ENCODE measurements at regions of chr3 and their contacts with region 1.

Region 1: DNA sequence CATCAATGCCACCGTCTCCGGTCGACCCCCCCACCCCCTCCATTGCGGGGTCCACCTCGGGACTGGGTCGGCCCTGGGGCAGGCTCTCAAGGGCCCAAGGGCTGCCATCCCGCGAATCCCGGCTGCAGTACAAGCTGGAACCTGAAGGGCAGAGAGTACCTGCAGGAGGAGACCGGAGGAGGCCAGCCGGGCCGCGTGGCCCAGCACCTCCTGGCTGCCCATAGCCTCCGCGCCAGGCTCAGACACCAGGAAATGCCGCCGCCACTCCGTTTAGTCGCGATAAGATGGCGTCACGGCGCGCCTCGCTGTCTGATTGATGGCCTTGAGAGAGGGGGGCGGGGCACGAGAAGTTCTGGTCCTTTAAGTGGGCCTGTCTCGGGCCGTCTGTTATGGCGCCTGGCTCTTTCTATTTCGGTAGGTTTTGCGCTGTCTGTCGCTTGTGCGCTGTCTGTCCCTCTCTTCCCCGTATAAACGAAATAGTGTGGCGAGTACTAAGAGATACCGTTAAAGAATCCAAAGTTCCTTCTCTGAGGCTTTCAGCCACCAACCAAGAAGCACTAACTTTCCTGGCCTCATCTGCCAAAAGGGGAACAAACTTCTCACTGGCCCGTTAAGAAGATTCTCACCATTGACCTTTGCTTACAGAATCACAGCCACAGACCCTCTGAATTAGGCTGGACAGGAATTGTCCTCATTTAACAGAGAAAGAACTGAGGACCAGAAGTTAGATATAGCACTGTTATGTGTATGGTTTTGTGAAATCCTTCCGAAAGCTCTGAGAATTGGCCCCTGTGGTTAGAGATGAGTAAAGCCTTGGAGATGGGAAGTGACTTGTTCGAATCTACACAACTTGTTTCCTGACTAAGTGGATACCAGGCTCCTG is at the start of gene RFT1:
- DNase-seq: peak; percentile 73
- ATAC-seq: peak; percentile 89
- H3K4me3 ChIP-seq: peak within 1 kb of the TSS; percentile 92
- H3K27ac ChIP-seq: peak within 1 kb of the TSS; percentile 87
- H3K4me1 ChIP-seq: peaks cover 7% of the 10 kb centered on the region; the same call in 1 of the 2 replicates
- H3K27me3 ChIP-seq: no peaks in the 10 kb centered on the region
- CTCF ChIP-seq: no peak
- EP300 ChIP-seq: no peak
- POLR2A ChIP-seq: peak; percentile 98
- RAD21 ChIP-seq: no peak
- polyA plus RNA-seq, gene RFT1: 24.7 to 29.0 TPM

Region 2: GRCh38 chr3:52552089-52552488 is 578.3 kb before region 1 on chr3:
- CTCF ChIA-PET with region 1: no interaction called
- POLR2A ChIA-PET with region 1: no interaction called
- RAD21 ChIA-PET with region 1: no interaction called
- SMC1A ChIA-PET with region 1: no interaction called
- in situ Hi-C with region 1: no loop called
- intact Hi-C with region 1: no loop called
- DNase-seq: no peak
- ATAC-seq: no peak
- H3K4me3 ChIP-seq: no peak overlapping the region
- H3K27ac ChIP-seq: no peak overlapping the region
- H3K4me1 ChIP-seq: no peaks in the 10 kb centered on the region
- H3K27me3 ChIP-seq: no peaks in the 10 kb centered on the region
- CTCF ChIP-seq: no peak
- EP300 ChIP-seq: no peak
- POLR2A ChIP-seq: no peak
- RAD21 ChIP-seq: no peak

Region 3: DNA sequence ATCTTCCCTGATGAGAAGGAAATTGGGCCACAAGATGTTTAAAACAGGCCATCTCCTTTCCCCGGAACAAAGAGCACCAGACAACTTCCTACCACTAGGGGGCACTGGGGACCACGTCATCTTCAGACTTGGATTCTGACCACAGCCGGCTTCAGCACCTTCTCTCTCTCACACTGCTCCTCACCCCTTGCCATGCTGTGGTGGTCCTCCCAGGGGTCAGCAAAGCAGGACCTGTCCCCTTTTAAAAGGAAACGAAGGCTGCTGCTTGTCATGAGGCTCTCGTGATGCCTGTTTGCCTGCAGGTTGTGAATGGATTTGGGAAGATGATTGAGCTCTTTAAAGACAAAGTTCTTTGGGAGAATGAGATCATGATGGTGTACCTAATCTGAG is 16.4 kb before region 1 on chr3:
- CTCF ChIA-PET with region 1: interaction called, 236 read pairs
- POLR2A ChIA-PET with region 1: interaction called, 7 read pairs
- RAD21 ChIA-PET with region 1: interaction called, 8 read pairs
- SMC1A ChIA-PET with region 1: interaction called, 67 read pairs
- in situ Hi-C with region 1: no loop called
- intact Hi-C with region 1: no loop called
- DNase-seq: no peak
- ATAC-seq: peak; percentile 99
- H3K4me3 ChIP-seq: no peak overlapping the region
- H3K27ac ChIP-seq: no peak overlapping the region
- H3K4me1 ChIP-seq: no peaks in the 10 kb centered on the region
- H3K27me3 ChIP-seq: no peaks in the 10 kb centered on the region
- CTCF ChIP-seq: peak; percentile 86 to 97 (median 94)
- EP300 ChIP-seq: no peak
- POLR2A ChIP-seq: no peak
- RAD21 ChIP-seq: peak; percentile 90

Region 4: DNA sequence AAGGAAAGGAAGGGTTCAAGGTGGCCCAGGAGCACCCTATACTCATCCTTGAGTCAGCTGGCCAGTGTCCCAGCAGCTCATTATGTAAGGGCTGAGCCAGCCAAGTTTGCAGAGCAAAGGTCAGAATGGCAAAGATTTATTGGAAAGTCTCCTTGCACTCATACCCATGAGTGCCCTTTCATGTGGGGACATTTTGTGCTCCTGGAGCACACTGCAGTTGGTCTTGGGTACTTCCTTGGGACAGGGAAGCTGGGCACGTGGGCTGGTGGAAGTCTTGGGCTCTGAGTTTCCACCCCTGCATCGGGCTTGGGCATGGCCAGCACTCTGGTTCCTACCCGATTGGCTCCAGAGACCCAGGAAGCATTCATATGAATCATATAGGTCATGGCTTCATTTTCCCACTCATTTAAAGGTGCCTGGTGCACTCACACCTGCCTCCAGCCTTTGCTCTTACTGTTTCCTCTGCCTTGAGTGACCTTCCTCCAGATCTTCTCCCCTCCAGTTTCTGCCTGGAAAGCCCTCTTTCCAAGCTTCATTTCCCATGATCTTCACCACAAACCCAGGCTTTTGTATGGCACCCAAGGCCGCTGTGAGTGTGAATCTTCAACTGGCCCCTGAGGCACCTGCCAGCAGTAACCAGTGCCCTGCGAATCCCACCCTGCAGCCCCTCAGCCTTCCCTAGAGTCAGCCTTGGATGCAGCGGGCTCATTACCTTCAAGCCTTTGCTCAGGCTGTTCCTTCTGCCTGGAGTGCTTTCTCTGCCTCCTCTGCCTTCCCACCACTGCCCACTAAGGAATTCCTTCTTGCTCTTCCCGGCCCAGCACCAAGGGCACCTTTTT is 20.0 kb after region 1 on chr3:
- CTCF ChIA-PET with region 1: interaction called, 27 read pairs
- POLR2A ChIA-PET with region 1: no interaction called
- RAD21 ChIA-PET with region 1: interaction called, 7 read pairs
- SMC1A ChIA-PET with region 1: interaction called, 65 read pairs
- in situ Hi-C with region 1: no loop called
- intact Hi-C with region 1: no loop called
- DNase-seq: no peak
- ATAC-seq: no peak
- H3K4me3 ChIP-seq: no peak overlapping the region
- H3K27ac ChIP-seq: no peak overlapping the region
- H3K4me1 ChIP-seq: no peaks in the 10 kb centered on the region
- H3K27me3 ChIP-seq: no peaks in the 10 kb centered on the region; a peak in 1 of 4 replicates
- CTCF ChIP-seq: no peak
- EP300 ChIP-seq: no peak
- POLR2A ChIP-seq: no peak
- RAD21 ChIP-seq: no peak

Region 5: GRCh38 chr3:53160660-53161449 is 30.4 kb after region 1 on chr3 and contains the start of gene PRKCD:
- CTCF ChIA-PET with region 1: interaction called, 45 read pairs
- POLR2A ChIA-PET with region 1: interaction called, 4 read pairs
- RAD21 ChIA-PET with region 1: interaction called, 10 read pairs
- SMC1A ChIA-PET with region 1: interaction called, 11 read pairs
- in situ Hi-C with region 1: no loop called
- intact Hi-C with region 1: loop called (anchors 2 kb)
- DNase-seq: no peak
- ATAC-seq: peak; percentile 74
- H3K4me3 ChIP-seq: peak within 1 kb of the TSS; percentile 97
- H3K27ac ChIP-seq: peak within 1 kb of the TSS; percentile 92
- H3K4me1 ChIP-seq: peaks cover 45% of the 10 kb centered on the region
- H3K27me3 ChIP-seq: no peaks in the 10 kb centered on the region; a peak in 1 of 4 replicates
- CTCF ChIP-seq: peak; percentile 30 to 65 (median 49)
- EP300 ChIP-seq: no peak
- POLR2A ChIP-seq: peak; percentile 78
- RAD21 ChIP-seq: peak; percentile 13; the same call in 1 of the 2 replicates
- polyA plus RNA-seq, gene PRKCD: 13.2 to 22.1 TPM

Region 6: DNA sequence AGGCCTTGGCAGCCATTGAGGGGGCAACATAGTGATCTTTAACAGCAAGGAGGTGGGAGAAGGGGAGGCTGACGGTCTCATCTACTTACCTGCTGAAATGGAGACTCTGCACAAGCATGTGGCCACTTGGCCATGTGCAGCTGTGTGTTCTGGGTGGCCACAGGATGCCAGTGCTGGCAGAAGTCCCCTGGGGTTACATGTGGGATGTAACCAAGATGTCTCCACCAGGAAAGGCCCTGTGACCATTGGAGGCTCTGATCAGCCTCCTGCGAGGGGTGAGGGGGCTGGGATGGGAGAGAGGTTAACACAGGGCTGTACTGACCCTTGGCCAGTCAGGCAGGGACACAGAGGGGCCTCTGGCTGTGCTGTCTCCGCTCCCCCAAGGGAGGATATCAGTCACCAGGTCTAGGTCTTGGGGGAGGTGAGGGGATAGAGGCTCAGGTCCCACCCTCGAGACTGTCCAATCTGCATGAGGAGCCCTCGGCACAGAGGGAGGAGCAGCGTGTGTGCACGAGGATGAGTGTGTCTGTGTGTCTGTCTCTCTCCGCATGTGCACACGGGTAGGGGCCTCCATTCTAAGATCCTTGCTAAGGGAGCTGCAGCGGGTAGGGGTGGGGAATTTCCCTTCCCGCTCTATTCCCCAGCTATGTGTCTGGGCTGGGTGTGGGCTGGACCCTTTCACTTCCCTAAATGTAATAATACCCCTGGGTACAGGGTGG is 50.0 kb after region 1 on chr3:
- CTCF ChIA-PET with region 1: interaction called, 25 read pairs
- POLR2A ChIA-PET with region 1: interaction called, 3 read pairs
- RAD21 ChIA-PET with region 1: interaction called, 4 read pairs
- SMC1A ChIA-PET with region 1: interaction called, 7 read pairs
- in situ Hi-C with region 1: no loop called
- intact Hi-C with region 1: no loop called
- DNase-seq: peak; percentile 84
- ATAC-seq: peak; percentile 97
- H3K4me3 ChIP-seq: peak overlapping the region; percentile 19; the same call in 1 of the 2 replicates
- H3K27ac ChIP-seq: peak overlapping the region; percentile 93
- H3K4me1 ChIP-seq: peaks cover 47% of the 10 kb centered on the region
- H3K27me3 ChIP-seq: no peaks in the 10 kb centered on the region
- CTCF ChIP-seq: no peak
- EP300 ChIP-seq: peak; percentile 56 to 88; a peak in 2 of 4 replicates
- POLR2A ChIP-seq: peak; percentile 63
- RAD21 ChIP-seq: no peak